GM10248 (cell line): ENCODE measurements at regions of chr3 and their contacts with region 1.

Region 1: DNA sequence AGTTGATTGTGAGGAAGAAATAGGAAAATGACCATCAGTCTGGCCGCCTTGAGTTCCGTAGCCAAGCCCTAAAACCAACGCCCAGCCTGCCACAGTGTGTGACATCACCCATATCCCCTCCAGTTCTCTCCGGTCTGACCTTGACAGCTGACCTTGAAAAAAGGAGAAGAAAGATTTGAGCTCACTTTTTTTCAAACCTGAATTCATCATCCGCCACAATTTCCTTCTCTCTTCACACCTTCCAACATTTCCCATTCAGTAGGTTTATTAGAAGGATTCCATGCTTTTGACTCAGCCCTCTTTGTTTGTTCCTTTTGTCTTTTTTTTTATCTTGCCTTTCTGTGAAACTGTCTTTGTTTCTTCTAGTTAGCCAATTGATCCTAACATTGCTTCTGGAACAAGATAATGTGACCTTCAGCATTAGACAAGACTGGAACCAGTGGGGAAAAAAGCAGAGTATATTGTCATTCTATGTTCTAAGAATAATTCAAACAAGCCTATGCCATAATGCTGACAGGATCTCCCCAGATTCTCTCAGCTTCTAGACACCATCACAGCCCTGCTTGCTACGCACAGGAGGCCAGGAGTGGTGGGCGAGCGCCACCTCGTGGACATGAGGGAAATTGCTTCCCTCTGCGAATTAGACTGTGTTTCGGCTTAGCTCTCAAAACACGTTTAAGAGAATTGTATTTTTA is 283.1 kb downstream of the FGF12 start:
- DNase-seq: peak; percentile 59
- CTCF ChIP-seq: peak; percentile 100

Region 2: GRCh38 chr3:190811775-190812480 is 1632.3 kb before region 1 on chr3:
- CTCF ChIA-PET with region 1: interaction called, 17 read pairs
- POLR2A ChIA-PET with region 1: no interaction called
- DNase-seq: peak; percentile 13
- CTCF ChIP-seq: peak; percentile 56

Region 3: GRCh38 chr3:191414286-191414685 is 1030.0 kb before region 1 on chr3:
- CTCF ChIA-PET with region 1: interaction called, 15 read pairs
- POLR2A ChIA-PET with region 1: no interaction called
- DNase-seq: no peak
- CTCF ChIP-seq: no peak

Region 4: DNA sequence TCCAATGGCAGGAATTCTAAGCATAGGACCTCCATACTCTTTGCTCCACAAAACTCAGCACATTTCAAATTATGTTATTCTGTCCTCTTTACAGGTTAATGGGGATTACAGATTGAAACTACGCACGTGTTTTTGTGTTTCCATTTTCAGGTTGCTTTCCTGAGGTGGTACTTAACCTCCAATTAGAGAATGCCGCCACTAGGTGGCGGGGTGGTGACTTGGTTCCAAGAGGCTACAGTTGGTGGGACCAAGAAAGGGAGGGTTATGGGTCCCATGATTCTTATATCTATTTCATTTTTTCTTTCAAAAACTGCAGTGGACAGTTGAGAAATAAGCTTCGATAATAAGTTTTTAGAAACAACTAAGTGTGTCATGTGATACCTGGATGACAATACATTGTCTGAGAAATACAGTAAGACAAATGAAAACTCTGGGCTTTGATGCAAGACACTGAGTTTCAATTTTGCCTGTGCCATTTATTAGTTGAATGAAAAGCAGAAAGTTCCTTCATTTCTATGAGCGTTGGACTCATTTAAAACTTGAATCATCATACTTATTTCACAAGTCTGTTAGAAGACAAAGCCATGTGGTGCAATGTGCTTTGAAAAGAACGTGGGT is 255.9 kb before region 1 on chr3:
- CTCF ChIA-PET with region 1: interaction called, 18 read pairs
- POLR2A ChIA-PET with region 1: no interaction called
- DNase-seq: peak; percentile 52
- CTCF ChIP-seq: peak; percentile 70

Region 5: GRCh38 chr3:192408007-192408646 is 36.1 kb before region 1 on chr3:
- CTCF ChIA-PET with region 1: no interaction called
- POLR2A ChIA-PET with region 1: no interaction called
- DNase-seq: peak; percentile 8
- CTCF ChIP-seq: no peak

Region 6: GRCh38 chr3:192433704-192434103 is 10.5 kb before region 1 on chr3:
- CTCF ChIA-PET with region 1: interaction called, 54 read pairs
- POLR2A ChIA-PET with region 1: no interaction called
- DNase-seq: no peak
- CTCF ChIP-seq: no peak

Region 7: GRCh38 chr3:192570821-192571791 is 126.9 kb after region 1 on chr3:
- CTCF ChIA-PET with region 1: no interaction called
- POLR2A ChIA-PET with region 1: no interaction called
- DNase-seq: no peak
- CTCF ChIP-seq: no peak